Left cardiac atrium (tissue), 4 donors: ENCODE measurements at regions of chr15 and their contacts with region 1.

Region 1: DNA sequence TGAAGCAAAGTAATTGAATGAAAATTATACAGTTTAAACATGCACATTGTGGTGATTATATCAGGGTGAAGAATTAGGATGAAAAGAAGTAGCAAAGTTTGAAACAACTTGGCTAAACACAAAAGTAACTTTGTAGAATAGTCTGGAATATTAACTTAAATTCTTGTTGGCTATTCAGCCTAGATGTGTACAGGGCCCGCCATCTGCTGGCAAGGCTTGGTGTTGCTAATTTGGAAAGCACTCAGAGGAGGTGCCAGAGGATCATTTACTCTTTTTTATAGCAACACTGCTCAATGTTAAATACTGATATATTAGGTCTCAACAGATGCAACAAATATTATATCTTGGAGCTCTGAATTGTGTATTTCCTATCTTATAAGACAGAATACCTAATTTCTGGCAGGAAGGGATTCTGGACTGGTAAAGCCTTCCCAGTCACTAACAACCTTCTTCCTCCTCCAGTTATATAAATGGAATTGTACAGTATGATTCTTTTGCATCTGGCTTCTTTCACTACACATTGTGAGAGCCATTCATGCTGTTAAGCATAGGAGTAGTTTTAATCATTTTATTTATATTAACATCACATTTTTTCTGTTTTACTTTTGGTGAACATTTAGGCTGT is 36.1 kb downstream of the TTC23 start:
- DNase-seq: peak; percentile 81
- ATAC-seq: peak; percentile 81 to 84

Region 2: DNA sequence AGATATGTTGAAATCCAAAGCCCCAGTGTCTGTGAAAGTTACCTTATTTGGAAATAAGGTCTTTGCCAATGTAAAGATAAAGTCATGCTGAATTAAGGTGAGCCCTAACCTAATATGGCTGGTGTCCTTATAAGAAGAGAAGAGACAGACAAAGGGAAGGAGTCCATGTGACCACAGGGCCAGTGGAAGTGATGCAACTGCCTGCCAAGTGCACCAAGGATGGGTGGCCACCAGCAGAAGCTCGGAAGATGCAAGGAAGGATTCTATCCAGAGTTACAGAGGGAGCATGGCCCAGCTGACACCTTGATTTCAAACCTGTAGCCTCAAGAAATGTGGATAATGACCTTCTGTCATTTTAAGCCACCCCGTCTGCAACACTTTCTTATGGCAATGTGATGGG is 170.4 kb before region 1 on chr15:
- intact Hi-C with region 1: no loop called
- DNase-seq: no peak
- ATAC-seq: no peak

Region 3: GRCh38 chr15:99104788-99105513 is 108.3 kb before region 1 on chr15 and contains the start of gene SYNM:
- intact Hi-C with region 1: loop called (anchors 2 kb)
- DNase-seq: peak; percentile 80
- ATAC-seq: peak; percentile 88 to 89
- total RNA-seq, gene SYNM: 302 to 329 TPM

Region 4: GRCh38 chr15:99169769-99170311 is 43.5 kb before region 1 on chr15:
- intact Hi-C with region 1: loop called (anchors 5 kb)
- DNase-seq: no peak
- ATAC-seq: peak; percentile 64 to 68